SK-N-SH (cell line): ENCODE measurements at regions of chr6 and their contacts with region 1.

Region 1: DNA sequence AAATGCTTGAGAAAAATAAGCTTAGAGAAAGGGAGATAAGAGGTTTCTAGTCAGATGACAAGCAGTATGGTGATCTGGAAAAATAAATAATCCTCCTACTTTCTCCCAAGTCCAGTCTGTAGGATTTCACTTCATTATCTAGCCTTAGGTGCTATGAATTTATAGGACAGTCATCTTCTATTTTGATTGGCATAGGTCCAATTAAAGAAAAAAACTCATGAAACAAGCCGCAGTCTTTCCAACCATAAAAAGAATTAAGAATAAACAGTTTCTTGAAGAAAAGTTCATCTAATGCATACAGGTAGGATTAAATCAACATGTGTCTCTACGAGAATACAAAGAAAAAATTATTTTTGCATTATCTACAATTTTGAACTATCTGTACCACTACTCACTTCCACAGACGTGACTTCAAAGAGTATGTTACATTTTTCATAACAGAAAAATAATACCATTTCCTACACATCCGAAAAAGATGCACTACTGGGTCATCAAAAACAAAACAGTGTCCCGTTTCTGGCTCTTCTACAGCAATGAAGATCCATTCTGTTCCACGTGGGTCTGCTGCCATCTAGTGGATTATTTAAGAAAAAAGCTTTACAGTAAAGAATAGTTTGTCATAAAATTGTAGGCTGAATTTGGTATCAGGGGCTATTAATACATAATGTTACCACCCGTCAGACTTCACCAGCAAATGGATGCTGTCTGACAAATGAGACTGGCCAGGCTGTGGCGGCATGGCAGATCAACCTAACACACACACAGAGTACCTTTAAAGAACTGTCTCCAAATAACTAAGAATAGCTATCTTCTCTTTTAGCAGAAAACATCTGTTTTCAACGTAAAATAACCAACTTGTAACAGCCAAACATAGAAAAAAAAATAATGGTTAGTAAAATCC is 28.9 kb downstream of the STX7 start:
- DNase-seq: peak; percentile 45
- H3K4me3 ChIP-seq: no peak overlapping the region
- H3K27ac ChIP-seq: no peak overlapping the region
- H3K4me1 ChIP-seq: no peaks in the 10 kb centered on the region; a peak in 1 of 4 replicates
- H3K27me3 ChIP-seq: no peaks in the 10 kb centered on the region
- CTCF ChIP-seq: peak; percentile 79
- EP300 ChIP-seq: no peak
- RAD21 ChIP-seq: peak; percentile 93

Region 2: GRCh38 chr6:132300323-132300949 is 183.6 kb before region 1 on chr6:
- CTCF ChIA-PET with region 1: interaction called, 96 read pairs
- POLR2A ChIA-PET with region 1: no interaction called
- DNase-seq: peak; percentile 14
- H3K4me3 ChIP-seq: no peak overlapping the region; a peak in 1 of 4 replicates
- H3K27ac ChIP-seq: no peak overlapping the region
- H3K4me1 ChIP-seq: no peaks in the 10 kb centered on the region; a peak in 1 of 4 replicates
- H3K27me3 ChIP-seq: no peaks in the 10 kb centered on the region
- CTCF ChIP-seq: peak; percentile 82
- EP300 ChIP-seq: no peak
- RAD21 ChIP-seq: peak; percentile 71

Region 3: GRCh38 chr6:132465530-132466485 is 18.2 kb before region 1 on chr6:
- CTCF ChIA-PET with region 1: interaction called, 65 read pairs
- POLR2A ChIA-PET with region 1: no interaction called
- DNase-seq: no peak
- H3K4me3 ChIP-seq: no peak overlapping the region
- H3K27ac ChIP-seq: no peak overlapping the region
- H3K4me1 ChIP-seq: no peaks in the 10 kb centered on the region
- H3K27me3 ChIP-seq: no peaks in the 10 kb centered on the region
- CTCF ChIP-seq: no peak
- EP300 ChIP-seq: no peak
- RAD21 ChIP-seq: no peak

Region 4: GRCh38 chr6:132498638-132499037 is 14.6 kb after region 1 on chr6:
- CTCF ChIA-PET with region 1: interaction called, 44 read pairs
- POLR2A ChIA-PET with region 1: no interaction called
- DNase-seq: no peak
- H3K4me3 ChIP-seq: no peak overlapping the region
- H3K27ac ChIP-seq: no peak overlapping the region
- H3K4me1 ChIP-seq: no peaks in the 10 kb centered on the region; a peak in 1 of 4 replicates
- H3K27me3 ChIP-seq: no peaks in the 10 kb centered on the region
- CTCF ChIP-seq: no peak
- EP300 ChIP-seq: no peak
- RAD21 ChIP-seq: no peak